ENCODE measurements at regions of chr20 and their contacts with region 1.

Region 1: GRCh38 chr20:62121776-62122631 is at the start of gene LSM14B:
- DNase-seq: peak; percentile 97
- H3K4me3 Mint-ChIP-seq: peak within 1 kb of the TSS; percentile 86
- H3K27ac Mint-ChIP-seq: peak within 1 kb of the TSS; percentile 95
- H3K4me1 Mint-ChIP-seq: peaks cover 49% of the 10 kb centered on the region
- H3K27me3 Mint-ChIP-seq: no peaks in the 10 kb centered on the region
- total RNA-seq, gene LSM14B: 33.4 to 35.1 TPM

Region 2: DNA sequence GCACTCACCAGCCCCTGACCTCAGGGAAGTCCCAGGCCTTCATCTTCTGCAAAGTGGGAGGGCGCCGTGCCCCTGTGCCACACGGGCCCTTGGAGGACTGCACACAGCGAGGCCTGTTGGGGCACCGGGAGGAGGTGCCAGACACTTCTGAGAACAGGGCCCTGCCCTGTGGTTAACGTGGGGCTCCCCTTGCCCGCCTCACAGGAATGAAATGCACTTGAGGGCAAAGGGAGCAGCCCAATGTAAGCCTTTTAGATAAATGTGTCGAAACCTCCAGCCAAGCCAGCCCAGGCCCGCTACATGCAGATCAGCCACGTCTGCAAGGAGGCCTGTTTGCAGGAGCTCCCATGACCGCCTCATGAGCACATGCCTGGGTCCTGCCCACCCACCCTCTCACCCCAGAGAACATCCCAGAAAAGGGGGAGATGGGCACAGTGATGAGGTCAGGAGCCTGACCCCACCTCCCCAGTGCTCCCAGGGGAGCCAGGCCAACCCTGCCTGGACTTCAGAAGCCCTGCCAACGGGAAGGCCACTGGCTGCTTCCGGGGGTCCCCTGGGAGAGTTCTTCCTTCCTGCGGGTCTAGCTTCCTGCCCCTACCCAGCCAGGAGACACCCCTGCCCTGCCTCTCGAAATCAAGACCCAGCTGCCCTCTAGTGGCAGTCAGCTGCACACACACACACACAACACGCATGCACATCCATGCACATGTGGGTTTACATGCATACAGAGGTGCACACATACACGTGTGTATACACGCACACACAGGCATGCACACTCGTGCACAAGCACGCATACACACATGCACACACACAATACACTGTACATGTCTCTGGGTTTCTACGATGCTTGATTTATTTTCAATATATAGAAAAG is 235.0 kb before region 1 on chr20:
- CTCF ChIA-PET with region 1: no interaction called
- POLR2A ChIA-PET with region 1: no interaction called
- intact Hi-C with region 1: no loop called
- DNase-seq: peak; percentile 46
- H3K4me3 Mint-ChIP-seq: no peak overlapping the region
- H3K27ac Mint-ChIP-seq: no peak overlapping the region
- H3K4me1 Mint-ChIP-seq: peaks cover 2% of the 10 kb centered on the region
- H3K27me3 Mint-ChIP-seq: peaks cover 8% of the 10 kb centered on the region

Region 3: DNA sequence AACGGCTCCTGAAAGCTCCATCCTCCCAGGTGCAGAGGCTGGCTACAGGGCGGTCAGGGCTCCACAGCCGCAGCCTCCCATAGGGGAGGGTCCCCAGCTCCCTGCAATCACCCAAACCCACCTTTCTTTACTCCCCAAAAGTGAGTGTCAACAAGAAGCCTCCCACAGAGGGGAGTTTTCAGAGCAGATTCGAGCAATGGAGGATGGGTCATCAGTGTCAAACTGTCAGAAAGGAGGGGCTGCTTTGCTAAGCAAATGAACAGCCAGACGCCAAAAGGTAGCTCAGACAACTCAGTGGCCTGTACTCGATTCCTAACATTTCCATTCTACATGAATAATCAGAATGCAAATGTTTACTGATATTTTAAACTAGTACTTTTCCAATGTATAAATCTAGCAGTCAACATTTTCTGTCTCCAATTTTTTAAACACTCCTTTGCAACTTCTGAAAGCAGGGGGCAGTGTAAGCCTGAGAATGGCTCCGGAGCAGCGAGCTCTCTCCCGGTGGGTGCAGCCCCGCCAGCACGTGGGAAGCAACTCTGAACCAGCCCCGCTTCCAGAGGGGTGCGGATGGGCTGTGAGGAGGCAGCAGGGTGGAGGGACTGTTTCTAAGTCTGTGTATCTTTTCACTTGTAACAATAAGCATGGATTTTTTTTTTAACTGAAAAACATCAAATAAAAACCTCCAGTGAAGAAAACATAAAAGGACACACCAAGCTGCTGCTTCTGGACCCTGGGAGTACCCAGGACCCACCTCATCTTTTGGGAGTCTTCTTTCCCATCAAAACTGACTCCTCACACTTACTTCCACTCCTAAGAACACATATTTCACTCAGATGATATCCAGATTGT is 111.2 kb before region 1 on chr20:
- CTCF ChIA-PET with region 1: interaction called, 8 read pairs
- POLR2A ChIA-PET with region 1: no interaction called
- intact Hi-C with region 1: loop called (anchors 5 kb)
- DNase-seq: peak; percentile 71
- H3K4me3 Mint-ChIP-seq: no peak overlapping the region
- H3K27ac Mint-ChIP-seq: no peak overlapping the region
- H3K4me1 Mint-ChIP-seq: peaks cover 7% of the 10 kb centered on the region
- H3K27me3 Mint-ChIP-seq: no peaks in the 10 kb centered on the region

Region 4: DNA sequence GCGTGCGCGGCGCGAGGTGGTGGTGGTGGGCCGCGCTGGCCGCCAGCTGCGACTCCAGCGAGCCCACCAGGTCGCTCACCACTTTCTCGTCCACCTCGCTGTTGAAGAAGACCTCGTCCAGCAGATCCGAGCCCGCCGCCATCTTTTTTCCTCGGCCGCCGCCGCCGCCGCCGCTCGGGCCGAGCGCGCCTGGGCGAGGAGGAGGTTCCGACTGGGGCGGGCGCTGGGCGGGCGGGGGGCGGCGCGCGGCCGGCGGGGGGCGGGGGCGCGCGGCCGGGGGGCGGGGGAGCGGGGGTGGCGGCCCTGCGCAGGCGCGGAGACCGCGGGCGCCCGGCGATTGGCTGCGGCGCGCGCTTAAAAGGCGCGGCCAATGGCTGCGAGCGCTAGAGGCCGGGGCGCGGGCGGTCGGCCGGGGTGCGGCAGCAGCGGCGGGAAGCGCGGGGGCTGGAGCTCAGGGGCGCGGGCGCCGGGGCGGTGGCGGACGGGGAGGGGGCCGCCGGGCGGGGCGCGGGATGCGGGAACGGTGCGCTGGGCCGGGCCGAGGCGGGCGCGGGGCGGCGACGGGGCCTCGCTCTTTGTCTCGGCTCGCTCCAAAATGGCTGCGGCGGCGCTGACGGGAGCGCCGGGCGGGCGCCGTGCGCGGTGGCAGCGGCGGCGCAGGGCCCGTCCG is 56.2 kb before region 1 on chr20 and contains the start of gene TAF4:
- CTCF ChIA-PET with region 1: interaction called, 13 read pairs
- POLR2A ChIA-PET with region 1: interaction called, 14 read pairs
- intact Hi-C with region 1: loop called (anchors 1 kb)
- DNase-seq: peak; percentile 83
- H3K4me3 Mint-ChIP-seq: peak within 1 kb of the TSS; percentile 79
- H3K27ac Mint-ChIP-seq: peak within 1 kb of the TSS; percentile 71
- H3K4me1 Mint-ChIP-seq: peaks cover 48% of the 10 kb centered on the region
- H3K27me3 Mint-ChIP-seq: no peaks in the 10 kb centered on the region
- total RNA-seq, gene TAF4: 15.3 to 17.0 TPM

Region 5: GRCh38 chr20:62136283-62137091 is 14.5 kb after region 1 on chr20:
- CTCF ChIA-PET with region 1: interaction called, 16 read pairs
- POLR2A ChIA-PET with region 1: interaction called, 15 read pairs
- intact Hi-C with region 1: no loop called
- DNase-seq: peak; percentile 76
- H3K4me3 Mint-ChIP-seq: no peak overlapping the region
- H3K27ac Mint-ChIP-seq: peak overlapping the region; percentile 32
- H3K4me1 Mint-ChIP-seq: peaks cover 49% of the 10 kb centered on the region
- H3K27me3 Mint-ChIP-seq: no peaks in the 10 kb centered on the region

Region 6: GRCh38 chr20:62182613-62183425 is 60.8 kb after region 1 on chr20 and contains the start of gene MTG2:
- CTCF ChIA-PET with region 1: no interaction called
- POLR2A ChIA-PET with region 1: interaction called, 4 read pairs
- intact Hi-C with region 1: loop called (anchors 1 kb)
- DNase-seq: peak; percentile 96
- H3K4me3 Mint-ChIP-seq: peak within 1 kb of the TSS; percentile 87
- H3K27ac Mint-ChIP-seq: peak within 1 kb of the TSS; percentile 91
- H3K4me1 Mint-ChIP-seq: peaks cover 39% of the 10 kb centered on the region
- H3K27me3 Mint-ChIP-seq: no peaks in the 10 kb centered on the region
- total RNA-seq, gene MTG2: 31.4 to 32.5 TPM

Measured in activated CD4-positive, alpha-beta memory T cell treated with anti-CD3 and anti-CD28 coated beads for 36 hours (primary cell).